Motor neuron (in vitro differentiated cells): ENCODE measurements at regions of chr15 and their contacts with region 1.

Region 1: GRCh38 chr15:47987908-47988532 is 132.8 kb upstream of the SLC24A5 start:
- ATAC-seq: peak; percentile 92 to 99 (median 95)
- H3K4me3 ChIP-seq: no peak overlapping the region
- H3K27ac ChIP-seq: no peak overlapping the region
- H3K4me1 ChIP-seq: peaks cover 0 to 12% of the 10 kb centered on the region in 2 donors

Region 2: DNA sequence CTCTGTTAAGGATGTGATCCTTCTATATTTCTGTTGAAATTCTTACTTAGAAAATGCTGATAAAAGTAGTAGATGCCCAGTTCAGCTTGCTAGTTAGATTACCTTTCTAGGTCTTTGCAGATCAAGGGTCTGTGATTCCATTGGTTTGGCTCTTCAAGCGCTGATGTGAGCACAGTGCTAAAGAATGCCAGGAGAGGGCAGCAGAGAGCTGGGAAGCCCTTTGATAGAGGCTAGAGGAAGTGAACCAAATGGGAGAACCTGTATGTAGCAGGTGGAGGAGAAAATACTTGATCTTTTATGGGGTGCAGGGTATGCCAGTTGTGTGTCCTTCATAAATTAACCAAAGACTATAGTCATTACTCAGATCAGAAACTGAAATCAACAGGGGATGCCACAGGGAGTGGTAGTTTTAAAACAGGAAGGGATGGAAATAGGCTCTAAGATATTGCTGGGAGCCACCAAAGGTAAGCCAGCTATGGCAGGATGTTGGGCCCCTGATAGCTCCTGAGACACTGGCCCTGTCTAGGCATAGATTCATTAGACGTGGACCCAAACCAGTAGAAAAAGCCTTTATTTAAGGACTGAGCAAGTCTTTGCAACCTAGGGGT is 1675.8 kb before region 1 on chr15:
- in situ Hi-C with region 1: loop called in 1 of 9 experiments (anchors 25 kb)
- ATAC-seq: peak; percentile 80 to 94 (median 88)
- H3K4me3 ChIP-seq: no peak overlapping the region
- H3K27ac ChIP-seq: no peak overlapping the region
- H3K4me1 ChIP-seq: peaks cover 17 to 28% of the 10 kb centered on the region in 2 donors

Region 3: DNA sequence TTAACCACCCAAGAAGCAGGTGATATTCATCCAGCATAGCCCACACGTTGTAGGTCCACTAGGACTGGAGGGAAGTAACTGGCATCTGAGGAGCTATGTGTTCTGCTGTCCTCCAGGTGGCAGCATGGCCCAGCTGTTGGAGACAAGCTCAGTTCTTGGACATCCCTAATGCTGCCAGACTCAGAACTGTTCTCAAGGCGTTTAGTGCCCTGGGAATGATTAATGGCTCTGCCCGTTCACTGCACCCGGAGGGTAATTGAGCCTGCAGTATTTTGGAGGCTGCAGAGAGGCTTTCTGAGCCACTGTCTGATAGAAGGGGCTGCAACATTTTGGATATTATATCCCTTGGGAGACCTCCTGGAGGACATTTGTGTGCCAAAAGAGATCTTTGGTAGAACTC is 792.0 kb before region 1 on chr15:
- in situ Hi-C with region 1: loop called in 8 of 9 experiments (anchors 10 to 25 kb)
- ATAC-seq: peak; percentile 95 to 99 (median 98)
- H3K4me3 ChIP-seq: no peak overlapping the region
- H3K27ac ChIP-seq: no peak overlapping the region
- H3K4me1 ChIP-seq: peaks cover 2 to 15% of the 10 kb centered on the region in 2 donors

Region 4: GRCh38 chr15:47473832-47474231 is 514.2 kb before region 1 on chr15:
- in situ Hi-C with region 1: loop called in 3 of 9 experiments (anchors 25 kb)
- ATAC-seq: no peak
- H3K4me3 ChIP-seq: no peak overlapping the region
- H3K27ac ChIP-seq: no peak overlapping the region
- H3K4me1 ChIP-seq: no peaks in the 10 kb centered on the region

Region 5: DNA sequence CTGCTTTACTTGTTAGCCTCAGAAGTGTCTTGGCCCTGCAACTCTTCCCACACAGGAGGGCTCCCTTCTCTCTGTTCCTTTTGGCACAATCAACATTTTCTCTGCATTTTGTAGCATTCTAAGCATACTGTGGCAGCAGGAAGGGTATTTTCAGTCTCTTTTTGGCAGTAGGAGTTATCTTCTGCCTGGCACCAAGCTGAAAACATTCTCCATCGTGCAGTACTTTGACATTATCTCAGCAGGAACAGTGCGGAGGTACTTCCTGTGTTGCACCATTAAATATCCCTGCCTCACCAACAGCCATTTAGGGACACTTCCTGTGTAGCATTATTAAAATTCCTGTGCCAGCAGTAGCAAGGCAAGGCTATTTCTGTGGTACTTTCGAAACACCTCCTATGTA is 504.0 kb before region 1 on chr15:
- in situ Hi-C with region 1: loop called in 2 of 9 experiments (anchors 25 kb)
- ATAC-seq: no peak
- H3K4me3 ChIP-seq: no peak overlapping the region
- H3K27ac ChIP-seq: no peak overlapping the region
- H3K4me1 ChIP-seq: no peaks in the 10 kb centered on the region

Region 6: GRCh38 chr15:47756872-47757271 is 231.1 kb before region 1 on chr15:
- in situ Hi-C with region 1: loop called in 1 of 9 experiments (anchors 25 kb)
- ATAC-seq: peak; percentile 86 to 100 (median 99)
- H3K4me3 ChIP-seq: no peak overlapping the region
- H3K27ac ChIP-seq: no peak overlapping the region
- H3K4me1 ChIP-seq: peaks cover 8 to 23% of the 10 kb centered on the region in 2 donors

Region 7: DNA sequence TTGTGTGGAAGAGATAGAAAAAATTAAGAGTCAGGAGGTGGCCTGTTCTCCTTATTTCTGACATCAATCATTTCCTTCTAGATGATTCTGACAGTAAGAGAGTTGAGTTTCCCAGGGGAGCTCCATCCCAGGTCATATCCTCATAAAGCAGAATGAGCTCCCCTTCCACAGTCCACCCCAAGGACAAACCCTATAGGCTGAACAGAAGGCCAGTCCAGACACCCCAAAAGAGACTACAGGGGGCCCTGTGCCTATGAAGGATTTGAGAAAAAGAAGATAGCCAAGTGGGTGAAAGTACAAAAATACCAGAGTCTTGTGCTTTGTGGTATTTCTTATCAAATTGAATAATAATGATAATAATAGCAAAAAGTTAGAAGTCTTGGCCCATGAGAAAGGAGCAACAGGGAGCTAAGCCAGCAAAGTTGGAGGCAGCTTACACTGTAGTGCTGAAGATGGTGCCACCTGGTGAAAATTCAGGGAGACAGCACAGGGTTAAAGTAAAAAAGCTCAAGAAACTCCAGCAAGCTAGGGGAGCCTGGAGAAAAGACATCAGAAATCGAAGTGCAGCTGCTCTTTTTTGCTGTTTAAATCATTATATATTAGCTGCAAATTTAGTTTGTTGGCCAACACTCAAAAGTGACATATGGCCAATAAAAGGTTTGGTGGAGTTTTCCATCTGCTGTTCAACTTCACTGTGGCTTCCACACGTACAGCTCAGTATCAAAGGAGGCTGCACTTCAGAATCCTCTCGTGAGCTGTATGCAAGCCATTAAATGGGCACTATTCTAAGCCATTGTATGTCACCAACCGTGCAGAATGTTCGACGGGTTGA is 97.0 kb after region 1 on chr15:
- in situ Hi-C with region 1: loop called in 1 of 9 experiments (anchors 10 kb)
- ATAC-seq: peak; percentile 45 to 84 (median 71)
- H3K4me3 ChIP-seq: no peak overlapping the region
- H3K27ac ChIP-seq: no peak overlapping the region
- H3K4me1 ChIP-seq: peaks cover 0 to 6% of the 10 kb centered on the region in 2 donors